IMR-90 (cell line): ENCODE measurements at regions of chr7 and their contacts with region 1.

Region 1: DNA sequence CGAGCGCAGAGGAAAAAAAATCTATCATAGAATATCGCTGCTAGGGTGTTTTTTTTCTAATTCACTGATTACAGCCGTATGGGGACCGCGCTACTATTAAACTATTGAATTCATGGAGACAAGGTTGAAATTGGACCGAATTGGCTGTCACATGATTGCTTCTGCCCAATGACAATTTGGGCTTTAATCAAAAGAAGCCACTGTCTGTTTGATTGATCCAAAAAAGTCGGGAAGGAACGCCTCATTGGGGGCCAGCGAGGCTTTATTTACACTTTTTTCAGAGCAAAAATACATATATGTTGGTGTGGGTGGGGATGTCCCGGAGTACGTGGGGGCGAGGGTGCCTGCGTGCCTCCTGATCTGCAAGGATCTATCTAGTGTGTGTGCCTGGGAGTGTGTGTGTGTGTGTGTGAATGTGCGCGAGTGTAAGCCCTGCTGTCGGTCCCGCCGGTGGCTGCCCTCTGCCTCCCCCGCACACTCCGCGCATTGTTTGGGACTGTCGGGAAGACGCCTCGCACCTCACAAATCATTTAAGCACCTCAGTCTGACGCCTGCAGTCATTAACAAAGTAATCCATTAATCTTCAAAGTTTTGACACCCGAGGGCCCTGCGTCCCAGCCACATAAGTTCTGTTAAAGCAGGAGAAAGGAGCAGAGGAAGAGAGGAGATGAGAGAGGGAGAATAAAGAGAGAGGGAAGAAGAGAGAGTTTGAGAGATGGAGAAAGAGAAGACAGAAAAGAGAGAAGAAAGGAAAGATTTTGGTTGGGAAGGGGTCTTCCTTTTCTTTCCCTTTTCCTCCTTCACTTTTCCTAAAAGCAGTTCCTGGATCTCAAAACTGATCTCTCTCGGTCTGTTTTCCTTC is at the start of gene HOXA2:
- DNase-seq: peak; percentile 91
- ATAC-seq: peak; percentile 18
- H3K4me3 ChIP-seq: peak within 1 kb of the TSS; percentile 52
- H3K27ac ChIP-seq: peak within 1 kb of the TSS; percentile 96
- H3K4me1 ChIP-seq: peaks cover 31% of the 10 kb centered on the region
- H3K27me3 ChIP-seq: no peaks in the 10 kb centered on the region
- CTCF ChIP-seq: no peak
- POLR2A ChIP-seq: no peak
- RAD21 ChIP-seq: no peak
- total RNA-seq, gene HOXA2: 1.6 and 1.7 TPM in 2 replicates

Region 2: DNA sequence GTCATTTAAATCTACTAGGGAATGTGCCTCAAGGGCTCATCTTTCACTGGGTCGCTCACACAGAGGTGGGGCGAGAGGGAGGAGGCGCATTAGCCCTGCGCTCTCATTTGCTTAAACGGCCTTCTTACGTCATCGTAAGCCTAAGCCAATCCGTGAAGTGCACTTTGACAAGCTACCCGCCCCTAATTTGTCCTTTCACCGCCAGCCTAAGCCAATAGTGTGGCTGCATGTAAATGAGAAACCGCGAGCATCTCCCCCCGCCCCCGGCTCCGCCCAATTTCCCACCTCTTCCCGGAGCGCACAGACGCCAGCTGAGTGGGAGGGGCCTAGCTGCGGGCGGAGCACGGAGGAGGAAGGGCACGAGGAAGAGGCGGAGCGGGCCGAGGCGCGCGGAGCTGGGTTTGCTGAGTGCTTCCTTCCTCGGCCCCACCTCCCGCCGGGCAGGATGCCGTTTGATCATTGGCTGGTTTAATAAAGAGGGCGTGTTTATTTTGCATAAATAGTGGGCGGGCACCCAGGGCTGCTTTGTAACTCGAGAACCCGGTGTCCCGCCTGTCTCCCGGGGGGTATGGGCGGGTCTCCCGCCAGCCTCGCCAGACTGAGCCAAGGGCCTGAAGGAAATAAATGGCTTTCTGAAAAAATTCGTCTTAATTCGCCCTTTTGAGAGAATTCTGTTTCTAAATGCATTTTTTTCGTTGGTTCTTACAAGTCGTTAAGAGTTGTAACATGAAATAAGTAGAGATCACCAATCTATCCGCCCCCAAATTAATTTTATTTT is 1240.4 kb before region 1 on chr7:
- CTCF ChIA-PET with region 1: no interaction called
- POLR2A ChIA-PET with region 1: no interaction called
- dilution Hi-C with region 1: no loop called
- in situ Hi-C with region 1: loop called (anchors 5 kb)
- intact Hi-C with region 1: no loop called
- DNase-seq: peak; percentile 100
- ATAC-seq: peak; percentile 97
- H3K4me3 ChIP-seq: no peak overlapping the region; the same call in 1 of the 2 replicates
- H3K27ac ChIP-seq: no peak overlapping the region
- H3K4me1 ChIP-seq: no peaks in the 10 kb centered on the region
- H3K27me3 ChIP-seq: peaks cover 10% of the 10 kb centered on the region
- CTCF ChIP-seq: no peak
- POLR2A ChIP-seq: no peak
- RAD21 ChIP-seq: no peak

Region 3: DNA sequence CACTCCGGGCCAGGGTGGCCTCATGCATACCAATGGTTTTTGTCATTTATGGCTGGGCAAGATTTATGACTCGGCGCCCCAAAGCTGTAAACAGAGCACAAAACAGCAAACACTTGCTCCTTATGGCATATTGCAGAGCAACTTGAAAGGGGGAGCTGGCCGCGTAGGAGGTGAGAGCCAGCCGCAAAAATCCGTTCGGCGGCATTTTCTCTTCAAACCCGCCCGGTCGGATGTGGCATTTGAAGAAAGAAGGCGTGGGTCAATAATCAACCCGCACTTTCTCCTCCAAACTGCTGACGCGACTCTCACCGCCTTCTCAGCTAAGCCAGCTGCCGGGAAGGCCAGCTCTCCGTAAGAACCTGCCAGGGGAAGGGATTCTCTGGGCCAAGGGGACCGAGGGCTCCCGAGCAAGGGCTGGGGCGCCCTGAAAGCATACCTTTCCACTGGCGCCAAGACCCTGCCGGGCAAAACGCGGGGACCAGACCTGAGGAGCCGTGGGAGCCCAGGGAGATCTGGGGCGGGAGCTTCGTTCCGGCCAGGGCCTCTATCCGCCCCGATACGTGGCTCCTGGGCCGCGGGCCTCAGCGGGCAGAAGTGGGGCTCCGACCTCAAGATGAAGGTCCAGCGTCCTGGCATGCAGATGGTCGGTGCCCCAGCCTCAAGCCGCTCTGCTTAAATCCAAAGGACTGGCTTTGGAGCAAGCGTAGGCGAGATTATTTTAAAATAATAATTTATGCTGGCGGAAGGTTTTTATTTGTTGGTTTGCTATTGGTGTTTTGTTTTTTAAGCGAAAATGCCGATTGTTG is 12.6 kb after region 1 on chr7:
- CTCF ChIA-PET with region 1: interaction called, 4 read pairs
- POLR2A ChIA-PET with region 1: interaction called, 4 read pairs
- dilution Hi-C with region 1: no loop called
- in situ Hi-C with region 1: no loop called
- intact Hi-C with region 1: loop called (anchors 1 kb)
- DNase-seq: peak; percentile 92
- ATAC-seq: peak; percentile 10
- H3K4me3 ChIP-seq: peak overlapping the region; percentile 71
- H3K27ac ChIP-seq: peak overlapping the region; percentile 89
- H3K4me1 ChIP-seq: peaks cover 21% of the 10 kb centered on the region
- H3K27me3 ChIP-seq: no peaks in the 10 kb centered on the region
- CTCF ChIP-seq: no peak
- POLR2A ChIP-seq: peak; percentile 84
- RAD21 ChIP-seq: no peak